Heart right ventricle (tissue), 16 donors: ENCODE measurements at regions of chr19 and their contacts with region 1.

Region 1: DNA sequence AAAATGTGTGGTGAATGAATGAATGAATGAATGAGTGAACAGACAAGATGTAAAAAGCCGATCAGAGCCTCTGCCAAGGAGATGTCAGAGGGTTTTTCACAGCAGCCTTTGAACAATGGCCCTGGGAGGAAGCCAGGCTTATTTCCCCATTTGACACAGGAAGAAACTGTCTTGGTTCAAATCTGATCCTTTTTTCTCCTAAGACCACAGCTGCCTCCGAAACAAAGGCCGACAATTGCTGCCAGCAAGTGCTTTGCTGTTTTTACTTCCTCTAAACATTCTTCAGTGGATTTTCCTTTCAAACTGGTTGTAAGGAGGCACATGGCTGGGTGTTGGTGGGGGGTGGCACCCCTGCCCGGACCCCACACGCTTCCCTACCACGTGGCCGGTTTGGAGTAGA is 44.2 kb upstream of the HOMER3 start:
- DNase-seq: peak in 1 of 2 donors; percentile 43
- ATAC-seq: peak in 6 of 8 donors; percentile 18 to 64 (median 50)
- H3K4me3 ChIP-seq: no peak overlapping the region
- H3K27ac ChIP-seq: peak overlapping the region in 6 of 10 donors; percentile 17 to 62 (median 43)
- H3K4me1 ChIP-seq: peaks cover 0 to 28% (median 14%) of the 10 kb centered on the region in 9 donors
- H3K27me3 ChIP-seq: peaks cover 0 to 8% (median 3%) of the 10 kb centered on the region in 7 donors
- CTCF ChIP-seq: no peak

Region 2: DNA sequence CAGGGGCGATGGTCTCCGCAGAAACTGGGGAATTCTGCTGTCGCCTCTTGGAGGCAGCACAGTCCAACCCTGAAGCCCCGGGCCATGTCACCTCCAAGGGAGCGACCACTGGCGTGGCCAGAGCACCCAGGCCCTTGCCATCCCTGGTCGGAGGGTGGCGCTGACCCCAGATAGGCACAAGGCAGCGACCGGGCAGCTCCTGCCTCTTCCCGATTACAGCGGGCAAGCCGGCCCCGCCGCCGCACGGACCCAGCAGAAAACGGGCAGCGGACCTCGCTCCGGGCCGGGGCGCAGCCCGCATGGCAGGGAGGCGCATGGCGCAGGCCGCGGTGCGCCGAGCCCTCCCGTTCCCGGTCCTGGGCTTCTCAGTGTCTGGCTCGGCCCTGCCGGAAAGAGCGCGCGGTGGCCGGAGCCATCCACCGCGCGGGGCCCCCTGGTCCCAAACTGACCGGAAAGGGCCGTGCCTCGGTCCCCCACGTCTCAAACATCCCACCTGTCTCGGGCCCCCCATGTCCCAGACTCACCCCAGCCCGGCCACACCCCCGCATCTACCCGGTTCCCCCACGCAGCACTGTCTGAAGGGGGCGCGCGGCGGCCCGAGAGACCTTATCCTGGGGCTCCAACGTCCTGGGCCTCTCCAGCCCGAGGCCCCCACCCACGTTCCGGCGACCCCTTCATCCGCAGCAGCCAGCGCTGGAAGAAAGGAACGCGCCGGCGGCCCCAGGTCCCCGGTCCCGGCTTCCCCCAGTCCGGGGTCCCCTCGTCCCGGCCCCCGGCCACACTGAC is 90.0 kb before region 1 on chr19:
- intact Hi-C with region 1: loop called in 1 of 10 experiments (anchors 10 kb)
- DNase-seq: no peak
- ATAC-seq: peak; percentile 35 to 65 (median 53)
- H3K4me3 ChIP-seq: peak overlapping the region; percentile 28 to 63 (median 51)
- H3K27ac ChIP-seq: peak overlapping the region in 1 of 10 donors; percentile 9
- H3K4me1 ChIP-seq: peaks cover 3 to 37% (median 16%) of the 10 kb centered on the region in 9 donors
- H3K27me3 ChIP-seq: peaks cover 0 to 37% (median 17%) of the 10 kb centered on the region in 7 donors
- CTCF ChIP-seq: peak in 7 of 9 donors; percentile 22 to 56 (median 44)

Region 3: DNA sequence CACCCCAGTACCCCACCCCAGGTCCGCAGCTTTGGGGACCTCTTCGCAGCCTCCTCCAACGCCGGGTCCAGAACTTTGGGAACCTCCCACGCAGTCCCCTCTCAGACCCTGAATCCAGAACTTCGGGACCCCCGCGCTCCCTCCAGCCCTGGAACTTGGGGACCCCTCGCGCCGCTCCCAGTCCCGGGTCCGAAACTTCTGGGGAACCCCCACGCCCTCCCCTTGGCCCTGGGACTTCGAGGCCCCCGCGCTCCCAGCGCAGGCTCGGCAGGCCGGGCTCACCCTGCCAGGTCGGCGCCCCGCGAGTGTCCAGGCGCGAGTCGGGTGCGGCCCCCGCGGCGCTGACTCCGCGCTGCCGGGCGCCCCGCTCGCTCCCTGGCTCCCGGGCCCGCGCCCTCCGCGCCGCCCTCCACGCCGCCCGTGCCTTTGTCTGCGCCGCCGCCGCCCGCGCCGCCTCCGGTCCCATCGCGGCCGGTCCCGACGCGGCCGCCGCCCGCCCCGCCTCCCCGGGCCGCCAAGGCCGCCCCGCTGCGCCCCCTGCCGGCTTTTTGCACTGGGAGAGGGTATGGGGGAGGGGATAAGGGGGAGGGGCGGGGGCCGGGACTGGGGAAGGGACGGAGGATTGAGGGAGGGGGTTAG is 44.4 kb before region 1 on chr19 and contains the start of gene HOMER3:
- intact Hi-C with region 1: loop called in 3 of 10 experiments (anchors 5 kb)
- DNase-seq: peak; percentile 85 to 88
- ATAC-seq: peak; percentile 69 to 91 (median 85)
- H3K4me3 ChIP-seq: peak within 1 kb of the TSS; percentile 58 to 96 (median 73)
- H3K27ac ChIP-seq: peak within 1 kb of the TSS in 7 of 10 donors; percentile 8 to 87 (median 72)
- H3K4me1 ChIP-seq: peaks cover 7 to 20% (median 12%) of the 10 kb centered on the region in 9 donors
- H3K27me3 ChIP-seq: no peaks in the 10 kb centered on the region
- CTCF ChIP-seq: peak in 5 of 9 donors; percentile 10 to 49 (median 33)
- total RNA-seq, gene HOMER3: 10.4 to 23.2 (median 13.6) TPM

Region 4: GRCh38 chr19:18946918-18947536 is 38.2 kb before region 1 on chr19:
- intact Hi-C with region 1: loop called in 3 of 10 experiments (anchors 5 kb)
- DNase-seq: no peak
- ATAC-seq: no peak
- H3K4me3 ChIP-seq: no peak overlapping the region
- H3K27ac ChIP-seq: no peak overlapping the region
- H3K4me1 ChIP-seq: no peaks in the 10 kb centered on the region
- H3K27me3 ChIP-seq: no peaks in the 10 kb centered on the region
- CTCF ChIP-seq: no peak